ENCODE measurements at regions of chr22 and their contacts with region 1.

Region 1: GRCh38 chr22:17319546-17319945 is 49.7 kb upstream of the CECR2 start:
- DNase-seq: no peak
- H3K4me3 ChIP-seq: no peak overlapping the region
- H3K27ac ChIP-seq: no peak overlapping the region
- H3K4me1 ChIP-seq: no peaks in the 10 kb centered on the region
- H3K27me3 ChIP-seq: no peaks in the 10 kb centered on the region
- CTCF ChIP-seq: no peak

Region 2: GRCh38 chr22:17237038-17237668 is 82.4 kb before region 1 on chr22:
- intact Hi-C with region 1: loop called (anchors 10 kb)
- DNase-seq: no peak
- H3K4me3 ChIP-seq: no peak overlapping the region
- H3K27ac ChIP-seq: no peak overlapping the region
- H3K4me1 ChIP-seq: no peaks in the 10 kb centered on the region
- H3K27me3 ChIP-seq: no peaks in the 10 kb centered on the region
- CTCF ChIP-seq: no peak